A549 (cell line): ENCODE measurements at regions of chr17 and their contacts with region 1.

Region 1: DNA sequence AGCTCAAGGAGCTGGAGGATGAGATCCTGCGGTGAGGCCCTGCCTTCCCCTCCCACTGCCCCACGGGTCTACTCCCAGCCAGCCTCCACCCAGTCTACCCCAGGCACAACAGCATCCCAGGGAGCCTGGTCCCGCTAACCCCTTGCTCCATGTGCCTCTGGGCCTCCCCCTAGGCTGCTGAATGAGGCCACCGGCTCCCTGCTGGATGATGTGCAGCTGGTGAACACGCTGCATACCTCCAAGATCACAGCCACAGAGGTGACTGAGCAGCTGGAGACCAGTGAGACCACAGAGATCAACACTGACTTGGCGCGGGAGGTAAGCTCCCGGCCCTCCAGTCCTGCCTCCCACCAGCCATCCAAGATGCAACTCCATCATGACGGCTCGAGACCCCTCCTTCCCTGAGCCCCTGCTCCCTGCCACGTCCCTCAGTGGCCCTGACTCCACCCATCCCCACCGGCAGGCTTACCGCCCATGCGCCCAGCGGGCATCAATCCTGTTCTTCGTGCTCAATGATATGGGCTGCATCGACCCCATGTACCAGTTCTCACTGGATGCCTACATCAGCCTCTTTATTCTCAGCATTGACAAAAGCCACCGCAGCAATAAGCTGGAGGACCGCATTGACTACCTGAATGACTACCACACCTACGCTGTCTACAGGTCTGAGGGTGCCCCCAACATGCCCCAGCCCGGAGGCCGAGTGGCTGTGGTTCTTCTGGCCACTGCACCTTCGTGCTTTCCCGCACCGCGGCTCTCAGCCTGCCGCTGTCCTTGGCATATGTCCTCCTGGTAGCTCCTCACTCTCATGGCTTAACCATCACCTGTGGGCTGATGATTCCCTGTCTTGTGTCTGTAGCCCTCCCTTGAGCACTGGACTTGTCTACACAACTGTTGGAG is 15.0 kb upstream of the KDM6B start:
- DNase-seq: no peak
- ATAC-seq: no peak
- H3K4me3 ChIP-seq: no peak overlapping the region
- H3K27ac ChIP-seq: no peak overlapping the region
- H3K4me1 ChIP-seq: no peaks in the 10 kb centered on the region
- CTCF ChIP-seq: no peak
- EP300 ChIP-seq: no peak
- POLR2A ChIP-seq: no peak
- RAD21 ChIP-seq: no peak

Region 2: DNA sequence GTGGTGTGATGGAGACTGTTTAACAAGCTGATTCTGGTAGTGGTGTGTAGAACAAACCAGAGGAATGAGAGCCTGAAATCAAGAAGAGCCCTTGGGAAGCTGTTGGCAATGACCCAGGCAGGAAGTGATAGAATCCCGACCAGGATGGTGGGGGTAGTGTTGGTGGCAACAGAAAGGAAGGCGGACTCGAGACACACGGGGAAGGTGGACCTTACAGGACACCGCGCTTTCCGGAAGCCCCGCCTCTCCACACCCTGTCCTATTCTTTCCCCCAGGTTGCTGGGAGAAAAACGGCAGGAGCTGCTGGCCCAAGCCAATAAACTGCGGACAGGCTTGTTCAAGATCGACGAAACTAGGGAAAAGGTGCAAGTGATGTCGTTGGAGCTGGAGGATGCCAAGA is 15.0 kb before region 1 on chr17:
- CTCF ChIA-PET with region 1: interaction called, 10 read pairs
- POLR2A ChIA-PET with region 1: no interaction called
- DNase-seq: no peak
- ATAC-seq: no peak
- H3K4me3 ChIP-seq: no peak overlapping the region
- H3K27ac ChIP-seq: no peak overlapping the region
- H3K4me1 ChIP-seq: peaks cover 1% of the 10 kb centered on the region
- CTCF ChIP-seq: no peak
- EP300 ChIP-seq: no peak
- POLR2A ChIP-seq: no peak
- RAD21 ChIP-seq: no peak

Region 3: DNA sequence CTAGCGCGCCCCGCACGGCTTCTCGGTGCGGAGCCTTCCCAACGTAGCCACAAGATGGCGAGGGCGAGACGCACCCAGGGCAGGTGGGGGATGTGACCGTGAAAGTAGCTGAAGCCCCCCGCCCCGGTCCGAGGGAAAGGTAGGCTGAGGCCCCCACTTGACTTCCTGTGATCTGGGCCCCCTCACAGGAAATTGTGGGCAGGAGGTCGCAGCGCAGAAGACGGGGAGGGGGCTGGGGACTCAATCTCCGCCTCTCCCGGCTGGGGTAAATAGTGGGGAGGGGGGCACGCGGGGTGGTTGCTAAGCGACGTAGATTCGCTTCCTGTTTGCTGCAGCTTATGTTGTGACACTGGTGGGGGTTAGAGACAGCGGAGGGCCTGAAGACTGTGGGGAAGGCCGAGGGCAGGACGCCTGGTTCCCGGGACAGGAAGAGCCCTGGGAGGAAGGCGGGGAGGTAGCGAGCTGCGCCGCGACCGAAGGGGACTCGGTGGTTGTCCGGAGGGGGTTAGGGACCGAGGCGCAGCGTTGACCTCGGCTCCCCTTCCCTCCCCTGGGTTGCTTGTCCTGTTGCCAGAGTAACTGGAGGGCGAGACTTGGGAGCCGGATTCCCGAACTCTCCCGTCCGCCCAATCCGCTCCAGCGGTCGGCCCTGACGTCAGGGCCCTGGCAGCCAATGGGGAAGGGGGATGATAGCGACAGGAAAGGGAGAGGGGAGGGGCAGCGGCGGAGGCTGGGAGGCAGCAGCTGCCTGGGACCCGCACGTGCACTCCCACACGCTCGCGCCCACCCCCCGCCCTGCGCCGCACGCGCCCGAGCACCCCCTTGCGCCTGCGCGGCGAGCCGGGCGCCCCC is 16.2 kb after region 1 on chr17:
- CTCF ChIA-PET with region 1: interaction called, 677 read pairs
- POLR2A ChIA-PET with region 1: interaction called, 3 read pairs
- DNase-seq: peak; percentile 99
- ATAC-seq: peak; percentile 58 to 73
- H3K4me3 ChIP-seq: peak overlapping the region; percentile 60
- H3K27ac ChIP-seq: peak overlapping the region; percentile 82 to 89
- H3K4me1 ChIP-seq: peaks cover 36% of the 10 kb centered on the region
- CTCF ChIP-seq: peak; percentile 87
- EP300 ChIP-seq: no peak
- POLR2A ChIP-seq: peak; percentile 39
- RAD21 ChIP-seq: peak; percentile 83 to 88